Head of caudate nucleus (tissue), 42 donors: ENCODE measurements at regions of chr3 and their contacts with region 1.

Region 1: DNA sequence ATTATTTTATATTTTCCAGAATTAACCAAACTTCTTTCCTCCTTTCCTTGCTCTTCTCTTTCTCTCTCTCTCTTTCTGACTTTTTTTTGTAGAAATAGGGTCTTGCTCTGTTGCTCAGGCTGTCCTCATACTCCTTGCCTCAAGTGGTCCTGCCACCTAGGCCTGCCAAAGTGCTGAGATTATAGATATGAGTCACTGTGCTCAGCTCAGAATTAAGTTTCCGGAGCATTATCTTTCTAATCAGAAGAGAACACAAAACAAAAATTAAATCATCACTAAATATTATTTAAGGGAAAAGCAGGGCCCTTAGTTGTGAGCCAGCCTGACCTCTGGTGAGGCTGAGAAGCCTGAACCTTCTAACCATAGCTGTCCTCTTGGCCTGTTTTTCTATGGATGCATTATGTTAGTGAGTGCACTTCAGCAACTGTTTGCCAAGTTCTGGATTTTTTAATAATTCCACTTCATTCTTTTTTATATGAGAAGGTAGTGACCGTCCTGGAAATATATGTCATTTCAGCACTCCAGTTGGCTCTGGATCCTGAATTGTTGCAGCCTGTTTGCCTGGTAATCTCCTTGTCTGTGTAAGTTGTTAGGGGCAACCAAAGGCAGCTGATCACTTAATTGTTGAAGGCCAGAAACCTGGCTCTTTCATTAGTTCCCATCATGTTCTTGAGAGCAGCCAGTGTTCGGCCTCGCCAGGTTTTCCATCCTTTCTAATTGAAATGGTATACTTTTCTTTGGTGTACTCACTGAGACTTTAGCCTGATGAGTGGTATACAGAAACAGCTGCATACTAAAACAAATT is 168.4 kb downstream of the SOX2 start:
- DNase-seq: peak in 4 of 42 donors; percentile 7 to 44 (median 16)

Region 2: GRCh38 chr3:182238126-182238525 is 358.0 kb after region 1 on chr3:
- intact Hi-C with region 1: loop called (anchors 5 kb)
- DNase-seq: peak; percentile 10 to 82 (median 62)